ENCODE measurements at regions of chr12 and their contacts with region 1.

Region 1: DNA sequence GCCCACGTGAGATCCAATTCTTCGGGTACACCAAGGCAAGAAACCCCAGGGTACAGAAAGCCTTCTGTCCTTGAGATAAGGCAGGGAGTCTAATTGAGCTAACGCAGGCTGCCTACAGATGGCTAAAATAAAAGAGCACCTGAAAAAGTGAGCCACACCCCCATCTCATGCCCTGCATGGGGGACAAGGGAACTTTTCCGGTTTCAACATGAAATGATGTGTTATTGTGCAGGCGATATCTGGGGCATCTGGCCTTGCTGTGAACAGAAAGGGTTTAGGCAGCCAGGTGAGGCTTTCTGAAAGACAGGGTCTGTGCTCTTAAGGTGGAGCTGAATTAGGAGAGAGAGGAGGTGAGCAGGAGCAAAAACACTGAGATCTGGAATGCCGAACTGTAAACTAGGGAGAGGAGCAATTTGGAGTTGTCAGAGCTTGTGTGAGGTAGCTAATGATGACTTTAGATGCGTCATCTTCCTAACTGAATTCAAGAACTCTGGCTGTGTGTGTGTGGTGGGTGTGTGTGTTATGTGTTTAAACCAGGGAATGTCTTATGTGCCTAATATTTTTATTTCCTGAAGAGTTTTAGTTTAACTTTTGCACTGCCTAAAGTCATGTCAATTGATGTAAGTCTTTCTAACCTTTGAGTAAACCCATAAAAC is 20.1 kb upstream of the LDHB start:
- DNase-seq: no peak
- H3K4me3 ChIP-seq: no peak overlapping the region
- H3K27ac ChIP-seq: no peak overlapping the region
- H3K4me1 ChIP-seq: peaks cover 0 to 4% (median 0%) of the 10 kb centered on the region in 4 donors
- H3K27me3 ChIP-seq: peaks cover 0 to 7% (median 0%) of the 10 kb centered on the region in 4 donors
- CTCF ChIP-seq: no peak
- EP300 ChIP-seq: no peak
- POLR2A ChIP-seq: no peak

Region 2: DNA sequence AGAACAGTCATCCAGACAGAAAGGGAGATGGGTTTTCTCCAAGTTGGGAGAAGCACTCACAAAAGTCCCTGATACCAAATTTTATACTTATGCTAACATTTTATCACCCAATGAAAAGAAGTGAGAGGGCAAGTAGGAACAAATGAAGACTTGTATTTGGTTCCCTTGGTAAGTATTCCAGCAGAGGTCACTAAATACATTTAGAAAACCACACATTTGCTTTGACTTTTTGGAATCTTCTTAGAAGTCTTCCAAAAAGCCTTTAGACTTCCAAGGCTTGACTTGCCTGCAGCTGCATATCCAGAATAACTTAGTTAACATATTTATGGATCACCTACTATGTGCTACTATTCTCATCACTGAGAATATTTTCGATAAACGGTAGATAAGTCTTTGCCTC is 70.0 kb before region 1 on chr12:
- intact Hi-C with region 1: loop called (anchors 2 kb)
- DNase-seq: no peak
- H3K4me3 ChIP-seq: no peak overlapping the region
- H3K27ac ChIP-seq: no peak overlapping the region
- H3K4me1 ChIP-seq: no peaks in the 10 kb centered on the region
- H3K27me3 ChIP-seq: no peaks in the 10 kb centered on the region
- CTCF ChIP-seq: peak; percentile 24 to 34 (median 30)
- EP300 ChIP-seq: no peak
- POLR2A ChIP-seq: no peak

Measured in esophagus muscularis mucosa (tissue), 4 donors.